A549 (cell line): ENCODE measurements at regions of chr13 and their contacts with region 1.

Region 1: DNA sequence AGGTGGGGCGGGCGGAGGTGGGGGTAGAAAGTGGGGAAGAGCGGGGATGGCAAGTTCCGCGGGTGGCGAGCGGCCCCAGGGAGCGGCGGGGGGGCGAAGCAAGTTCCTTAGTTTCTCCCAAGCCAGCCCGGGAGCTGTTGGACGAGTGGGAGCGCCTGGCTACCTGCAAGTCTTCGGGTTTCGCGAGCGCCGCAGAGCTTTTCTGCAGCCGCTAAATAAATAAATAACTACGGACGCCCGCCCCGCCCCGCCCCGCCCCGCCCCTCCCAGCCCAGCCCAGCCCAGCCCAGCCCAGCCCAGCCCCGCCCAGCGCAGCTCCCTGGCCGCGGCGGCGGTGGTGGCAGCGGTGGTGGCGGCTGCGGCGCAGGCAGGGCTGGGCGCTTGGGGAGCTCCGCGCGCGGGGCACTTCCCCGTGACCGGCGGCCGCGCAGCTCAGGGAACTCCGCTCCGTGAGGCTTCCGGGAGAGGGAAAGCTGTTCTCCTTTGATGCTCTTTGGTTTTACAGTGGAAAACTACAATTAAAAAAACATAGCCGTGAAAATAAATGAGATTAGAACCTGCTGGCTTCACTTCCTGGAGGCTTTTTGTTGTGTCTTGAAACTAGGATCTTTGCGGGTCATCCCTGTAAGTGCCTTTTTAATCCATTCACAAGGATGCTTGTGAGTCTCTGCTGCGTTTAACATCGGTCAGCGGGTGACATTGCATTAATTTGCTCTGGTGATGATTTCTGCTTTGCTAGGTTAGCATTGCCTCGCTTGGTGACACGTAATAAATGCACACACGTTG is at the start of gene UBE2L5:
- DNase-seq: peak; percentile 9 to 87
- ATAC-seq: peak; percentile 81 to 94
- H3K4me3 ChIP-seq: peak within 1 kb of the TSS; percentile 52
- H3K27ac ChIP-seq: peak within 1 kb of the TSS; percentile 86 to 87
- H3K4me1 ChIP-seq: peaks cover 10% of the 10 kb centered on the region; the same call in 2 of the 3 replicates
- CTCF ChIP-seq: no peak
- EP300 ChIP-seq: no peak
- POLR2A ChIP-seq: peak; percentile 70
- RAD21 ChIP-seq: peak in 1 of 2 experiments; percentile 18; a peak in 1 of 5 replicates
- polyA plus RNA-seq, gene UBE2L5: 0.48 TPM in 1 of 2 replicates, not detected in the other

Region 2: DNA sequence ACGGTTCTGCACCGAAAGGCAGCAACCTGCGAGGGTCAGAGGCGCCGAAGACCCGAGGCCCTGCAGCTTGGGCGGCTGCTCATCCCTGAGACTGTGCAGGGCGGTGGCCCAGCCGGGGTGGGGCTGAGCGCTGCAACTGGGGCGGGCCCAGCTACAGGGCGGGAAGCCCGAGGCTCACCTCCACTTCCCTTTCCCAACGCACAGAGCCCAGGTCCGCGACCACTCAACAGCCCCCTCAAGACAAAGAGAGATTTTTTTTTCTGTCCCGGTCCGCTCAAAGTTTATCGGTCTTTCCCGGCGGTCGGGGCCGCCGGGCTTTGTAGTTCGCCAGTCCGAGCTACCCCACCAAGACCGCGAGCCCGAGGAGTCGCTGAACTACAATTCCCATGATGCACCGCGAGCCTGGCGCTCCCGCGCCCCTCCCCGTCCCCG is 115.5 kb before region 1 on chr13:
- CTCF ChIA-PET with region 1: no interaction called
- POLR2A ChIA-PET with region 1: interaction called, 12 read pairs
- DNase-seq: peak; percentile 52 to 89
- ATAC-seq: peak; percentile 92 to 94
- H3K4me3 ChIP-seq: peak overlapping the region; percentile 87
- H3K27ac ChIP-seq: peak overlapping the region; percentile 98 to 99
- H3K4me1 ChIP-seq: peaks cover 36% of the 10 kb centered on the region
- CTCF ChIP-seq: no peak
- EP300 ChIP-seq: no peak
- POLR2A ChIP-seq: peak; percentile 24; the same call in 1 of the 2 replicates
- RAD21 ChIP-seq: no peak

Region 3: GRCh38 chr13:30395192-30396084 is 26.8 kb before region 1 on chr13:
- CTCF ChIA-PET with region 1: interaction called, 3 read pairs
- POLR2A ChIA-PET with region 1: interaction called, 16 read pairs
- DNase-seq: peak; percentile 53 to 88
- ATAC-seq: peak; percentile 88 to 90
- H3K4me3 ChIP-seq: peak overlapping the region; percentile 55
- H3K27ac ChIP-seq: peak overlapping the region; percentile 87 to 89
- H3K4me1 ChIP-seq: peaks cover 11% of the 10 kb centered on the region
- CTCF ChIP-seq: no peak
- EP300 ChIP-seq: peak in 1 of 2 experiments; percentile 21; a peak in 1 of 5 replicates
- POLR2A ChIP-seq: no peak; the same call in 1 of the 2 replicates
- RAD21 ChIP-seq: no peak

Region 4: GRCh38 chr13:30408319-30409101 is 13.7 kb before region 1 on chr13:
- CTCF ChIA-PET with region 1: interaction called, 16 read pairs
- POLR2A ChIA-PET with region 1: interaction called, 13 read pairs
- DNase-seq: peak; percentile 69 to 91
- ATAC-seq: peak; percentile 97 to 98
- H3K4me3 ChIP-seq: peak overlapping the region; percentile 33
- H3K27ac ChIP-seq: peak overlapping the region; percentile 73 to 82
- H3K4me1 ChIP-seq: peaks cover 16% of the 10 kb centered on the region; the same call in 2 of the 3 replicates
- CTCF ChIP-seq: peak; percentile 56
- EP300 ChIP-seq: no peak
- POLR2A ChIP-seq: peak; percentile 57
- RAD21 ChIP-seq: peak; percentile 29 to 70; a peak in 4 of 5 replicates

Region 5: DNA sequence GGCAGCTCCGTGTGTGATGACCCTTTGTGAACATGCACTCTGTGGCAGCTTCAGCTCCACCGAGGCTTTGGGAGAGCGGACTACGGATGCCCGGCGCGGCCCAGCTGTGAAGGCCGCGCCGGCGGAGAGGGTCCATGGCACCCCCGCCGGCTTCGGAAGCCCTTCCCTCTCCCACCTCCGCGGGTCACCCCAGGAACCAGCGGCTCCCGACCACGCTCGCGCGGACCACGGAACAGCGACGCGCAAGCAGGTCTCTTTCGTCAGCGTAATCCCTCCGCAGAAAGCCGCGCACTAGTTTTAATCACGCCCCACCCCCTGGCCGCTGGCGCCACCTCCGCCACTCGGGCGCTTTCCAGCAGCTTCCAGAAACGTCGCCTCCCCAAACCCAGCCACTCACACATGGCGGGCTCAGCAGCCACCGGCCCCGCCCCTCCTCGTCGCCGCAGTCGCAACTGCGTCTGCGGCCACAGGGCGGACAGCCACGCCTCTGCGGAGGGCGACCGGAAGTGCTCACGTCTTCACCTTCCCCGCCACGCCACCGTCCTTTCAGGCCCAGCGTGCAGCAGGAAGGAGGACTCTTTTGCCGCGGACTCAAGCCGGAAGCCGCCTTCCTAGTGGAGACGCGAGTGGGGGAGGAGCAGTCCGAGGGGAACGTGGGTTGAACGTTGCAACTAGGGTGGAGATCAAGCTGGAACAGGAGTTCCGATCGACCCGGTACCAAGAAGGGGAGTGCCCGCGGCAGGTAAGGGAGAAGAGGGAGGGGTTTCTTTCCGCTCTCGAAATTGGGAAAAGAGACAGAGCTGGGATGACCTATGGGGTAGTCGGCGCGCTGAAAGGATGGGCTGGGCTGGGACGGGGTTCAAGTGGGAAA is 195.3 kb after region 1 on chr13 and contains the start of gene USPL1:
- CTCF ChIA-PET with region 1: no interaction called
- POLR2A ChIA-PET with region 1: interaction called, 10 read pairs
- DNase-seq: peak; percentile 73 to 99
- ATAC-seq: peak; percentile 94 to 95
- H3K4me3 ChIP-seq: peak within 1 kb of the TSS; percentile 82
- H3K27ac ChIP-seq: peak within 1 kb of the TSS; percentile 97 to 98
- H3K4me1 ChIP-seq: peaks cover 20% of the 10 kb centered on the region; the same call in 2 of the 3 replicates
- CTCF ChIP-seq: no peak
- EP300 ChIP-seq: no peak
- POLR2A ChIP-seq: peak; percentile 79
- RAD21 ChIP-seq: no peak; a peak in 1 of 5 replicates
- polyA plus RNA-seq, gene USPL1: 22.7 and 23.0 TPM in 2 replicates

Region 6: DNA sequence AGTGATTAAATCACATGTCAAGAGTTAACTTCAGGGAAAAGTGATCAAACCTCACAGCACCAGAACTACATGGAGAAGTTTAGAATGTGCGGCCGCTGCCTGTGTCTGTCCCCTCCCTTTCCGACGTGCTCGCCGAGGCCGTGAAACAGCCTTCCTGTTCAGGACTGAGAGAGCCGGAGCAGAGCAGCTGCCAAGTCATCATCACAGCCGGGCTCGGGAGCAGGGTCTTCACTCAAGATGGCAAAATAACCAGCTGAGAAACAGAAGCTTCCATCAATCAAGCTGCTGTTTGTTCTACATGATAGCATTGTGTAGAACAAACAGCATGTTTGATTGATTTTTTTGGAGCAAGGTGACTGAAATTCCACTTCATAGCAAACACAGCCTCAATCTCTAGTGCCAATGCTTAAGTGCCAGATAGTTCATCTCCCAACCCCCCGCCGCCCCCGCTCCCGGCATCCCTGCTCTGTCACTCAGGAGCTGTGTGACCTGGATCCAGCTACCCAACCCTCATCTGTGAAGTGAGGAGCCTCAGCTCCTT is 668.8 kb after region 1 on chr13:
- CTCF ChIA-PET with region 1: no interaction called
- POLR2A ChIA-PET with region 1: no interaction called
- DNase-seq: no peak
- ATAC-seq: no peak
- H3K4me3 ChIP-seq: no peak overlapping the region
- H3K27ac ChIP-seq: no peak overlapping the region
- H3K4me1 ChIP-seq: no peaks in the 10 kb centered on the region
- CTCF ChIP-seq: no peak
- EP300 ChIP-seq: no peak
- POLR2A ChIP-seq: no peak
- RAD21 ChIP-seq: no peak